ENCODE measurements at regions of chr3 and their contacts with region 1.

Region 1: GRCh38 chr3:159804726-159805410 is 183.8 kb upstream of the IL12A start:
- DNase-seq: peak; percentile 64
- CTCF ChIP-seq: peak; percentile 93

Region 2: DNA sequence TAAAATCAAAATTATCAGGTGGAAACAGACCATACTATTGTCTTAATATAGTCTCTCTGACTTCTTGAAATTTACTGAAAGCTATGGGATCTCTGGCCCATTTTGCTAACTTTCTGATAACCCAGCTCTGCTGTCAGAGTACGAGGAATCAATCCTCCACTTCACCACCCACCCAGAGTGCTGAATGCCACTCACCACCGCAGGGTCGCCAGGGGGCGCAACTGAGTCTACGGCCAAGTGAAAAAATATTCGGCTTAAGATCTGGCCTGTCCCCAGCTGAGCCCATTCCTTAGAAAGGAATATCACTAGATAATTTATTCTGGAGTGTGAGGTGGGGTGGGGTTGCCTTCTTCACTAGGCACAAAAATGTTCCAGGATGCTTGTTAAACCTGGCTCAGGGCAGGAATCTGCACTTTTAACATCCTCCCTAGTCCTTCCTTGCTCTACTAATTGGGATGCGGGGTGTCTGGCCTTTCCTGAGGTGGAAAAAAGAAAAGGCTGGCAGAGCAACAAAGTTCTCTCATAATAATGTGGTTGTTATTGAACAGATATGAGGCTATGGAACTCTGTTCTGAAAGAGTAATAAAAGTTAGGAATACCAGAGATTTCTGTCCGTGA is 482.4 kb before region 1 on chr3:
- in situ Hi-C with region 1: loop called (anchors 25 kb)
- DNase-seq: peak; percentile 47
- CTCF ChIP-seq: peak; percentile 94

Measured in GM13977 (cell line).